ENCODE measurements at regions of chr12 and their contacts with region 1.

Region 1: DNA sequence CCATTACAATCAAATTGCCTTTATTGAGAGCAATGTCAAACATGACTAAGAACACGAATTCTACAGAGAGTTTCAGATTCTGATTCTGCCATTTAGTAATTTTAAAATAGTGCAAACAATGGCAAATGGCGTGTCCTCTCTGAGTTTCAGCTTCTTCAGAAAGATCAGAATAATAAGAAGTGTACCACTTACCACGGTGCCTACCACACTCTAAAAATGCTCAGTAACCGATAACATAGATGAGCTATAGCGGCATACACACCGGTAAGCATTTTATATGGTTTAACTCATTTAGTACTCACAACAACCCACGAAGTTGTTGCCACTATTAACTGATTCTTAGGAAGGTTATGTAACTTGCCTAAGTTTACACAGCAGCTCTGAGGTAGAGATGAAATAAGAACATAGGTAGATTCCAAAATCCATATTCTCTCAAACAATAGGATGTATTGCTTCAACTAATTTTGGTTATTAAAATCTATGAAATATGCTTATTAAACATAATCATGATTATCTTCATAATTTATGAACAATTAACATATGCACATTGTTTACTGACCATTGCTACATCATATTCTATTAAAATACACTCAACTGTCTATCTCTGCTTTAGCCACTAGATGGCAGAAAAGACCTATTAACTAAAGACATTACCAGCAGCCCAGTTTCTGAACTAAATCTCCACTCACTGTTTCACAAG is 38.3 kb downstream of the SLC6A15 start:
- DNase-seq: no peak
- ATAC-seq: peak; percentile 38

Region 2: DNA sequence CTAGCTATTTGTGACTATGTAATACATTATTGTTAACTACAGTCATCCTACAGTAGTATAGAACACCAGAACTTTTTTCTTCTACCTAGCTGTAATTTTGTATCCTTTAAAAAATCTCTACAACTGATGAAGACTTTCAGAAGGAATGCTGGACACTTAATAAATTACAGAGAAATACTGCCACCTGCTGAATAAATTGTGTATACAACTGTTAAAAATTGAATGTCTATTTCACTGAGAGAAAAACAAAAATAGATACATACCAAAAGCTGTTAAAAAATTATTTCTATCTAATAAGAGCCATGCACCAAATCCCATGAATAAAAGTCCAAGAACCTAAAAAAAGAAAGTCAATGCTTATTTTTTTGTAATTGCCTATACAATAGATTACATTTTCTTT is 155.2 kb after region 1 on chr12:
- intact Hi-C with region 1: loop called (anchors 5 kb)
- DNase-seq: no peak
- ATAC-seq: no peak